ENCODE measurements at regions of chr2 and their contacts with region 1.

Region 1: DNA sequence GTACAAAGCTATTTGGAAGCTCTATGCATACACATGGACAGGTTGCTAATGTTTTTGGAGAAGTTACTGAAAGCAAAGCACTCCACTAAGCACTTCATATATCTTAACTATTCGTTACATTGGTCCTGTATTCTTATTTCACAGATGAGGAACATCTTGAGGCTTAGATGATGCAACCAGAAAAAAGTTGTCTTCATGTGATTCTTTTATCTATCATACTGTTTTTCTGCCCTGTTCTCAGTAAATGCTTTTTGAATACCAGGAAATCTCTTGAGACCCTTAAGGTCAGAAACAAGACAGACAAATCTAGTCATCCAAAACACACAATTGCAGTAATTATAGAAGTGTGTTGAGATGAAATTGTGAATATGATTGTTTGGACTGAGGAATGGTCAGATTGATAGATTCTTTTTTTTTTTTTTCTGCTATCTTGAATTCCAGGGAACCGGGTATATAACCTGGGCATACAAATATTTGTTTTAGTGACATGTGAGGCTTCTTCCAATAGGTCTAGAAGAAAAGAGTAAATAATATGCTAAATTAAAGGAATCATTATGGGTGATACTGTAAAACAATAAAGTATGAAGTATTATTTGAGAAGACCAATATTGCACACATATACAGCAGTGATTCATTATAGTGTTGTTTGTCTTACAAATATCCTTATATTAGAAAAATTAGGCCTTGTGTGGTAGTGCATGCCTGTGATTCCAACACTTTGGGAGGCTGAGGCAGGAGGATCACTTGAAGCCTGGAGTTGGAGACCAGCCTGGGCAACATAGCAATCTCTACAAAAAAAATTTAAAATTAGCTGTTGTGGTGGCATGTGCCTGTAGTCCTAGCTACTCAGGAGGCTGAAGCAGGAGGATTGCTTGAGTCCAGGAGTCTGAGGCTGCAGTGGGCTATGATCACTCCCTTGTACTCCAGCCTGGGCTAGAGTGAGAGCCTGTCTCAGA is 33.7 kb downstream of the EHBP1 start:
- DNase-seq: no peak
- H3K4me3 ChIP-seq: no peak overlapping the region
- H3K4me3 Mint-ChIP-seq: no peak overlapping the region
- H3K27ac Mint-ChIP-seq: no peak overlapping the region
- H3K4me1 ChIP-seq: peaks cover 41% of the 10 kb centered on the region
- H3K4me1 Mint-ChIP-seq: peaks cover 46% of the 10 kb centered on the region
- H3K27me3 ChIP-seq: no peaks in the 10 kb centered on the region
- H3K27me3 Mint-ChIP-seq: no peaks in the 10 kb centered on the region
- CTCF ChIP-seq: no peak

Region 2: DNA sequence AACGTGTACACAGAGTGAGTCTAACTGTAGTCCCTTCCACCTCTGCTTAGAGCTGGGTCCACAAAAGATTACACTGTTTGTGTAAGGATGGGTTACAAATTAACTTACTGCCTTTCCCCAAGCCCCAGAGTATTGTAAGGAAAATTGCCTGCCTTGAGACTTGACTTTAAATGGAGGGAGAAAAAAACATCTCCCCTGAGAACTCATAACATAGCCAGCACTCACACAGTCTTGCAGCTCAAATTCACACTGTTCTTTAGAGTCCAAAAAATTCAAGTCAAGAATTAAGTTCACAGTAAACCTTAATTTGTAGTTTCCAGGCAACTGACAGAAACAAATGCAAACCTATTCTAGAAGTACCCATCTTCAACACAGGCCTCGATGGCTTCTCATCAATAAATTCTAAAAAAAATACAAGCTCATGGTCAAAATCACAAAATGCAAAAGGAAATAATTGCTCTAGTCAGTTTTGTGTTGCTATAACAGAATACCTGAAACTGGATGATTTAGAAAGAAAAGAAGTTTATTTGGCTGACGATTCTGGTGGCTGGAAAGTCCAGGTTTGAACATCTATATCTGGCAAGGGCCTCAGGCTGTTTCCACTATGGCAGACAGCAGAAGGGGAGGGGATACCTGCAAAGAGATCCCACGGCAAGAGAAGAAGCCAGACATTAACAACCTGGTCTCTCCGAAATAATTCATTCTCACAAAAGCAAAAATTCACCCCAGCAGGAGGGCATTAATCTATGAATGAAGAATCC is 198.7 kb before region 1 on chr2:
- CTCF ChIA-PET with region 1: no interaction called
- POLR2A ChIA-PET with region 1: no interaction called
- intact Hi-C with region 1: loop called (anchors 1 kb)
- DNase-seq: peak in 1 of 2 experiments; percentile 67
- H3K4me3 ChIP-seq: no peak overlapping the region
- H3K4me3 Mint-ChIP-seq: peak overlapping the region; percentile 9
- H3K27ac Mint-ChIP-seq: peak overlapping the region; percentile 78
- H3K4me1 ChIP-seq: peaks cover 60% of the 10 kb centered on the region
- H3K4me1 Mint-ChIP-seq: peaks cover 61% of the 10 kb centered on the region
- H3K27me3 ChIP-seq: no peaks in the 10 kb centered on the region
- H3K27me3 Mint-ChIP-seq: no peaks in the 10 kb centered on the region
- CTCF ChIP-seq: no peak

Region 3: GRCh38 chr2:62631160-62632085 is 107.8 kb before region 1 on chr2:
- CTCF ChIA-PET with region 1: no interaction called
- POLR2A ChIA-PET with region 1: interaction called, 12 read pairs
- intact Hi-C with region 1: no loop called
- DNase-seq: peak in 1 of 2 experiments; percentile 43
- H3K4me3 ChIP-seq: no peak overlapping the region
- H3K4me3 Mint-ChIP-seq: no peak overlapping the region
- H3K27ac Mint-ChIP-seq: no peak overlapping the region
- H3K4me1 ChIP-seq: peaks cover 6% of the 10 kb centered on the region; the same call in 1 of the 2 replicates
- H3K4me1 Mint-ChIP-seq: peaks cover 6% of the 10 kb centered on the region
- H3K27me3 ChIP-seq: no peaks in the 10 kb centered on the region
- H3K27me3 Mint-ChIP-seq: no peaks in the 10 kb centered on the region
- CTCF ChIP-seq: no peak

Region 4: DNA sequence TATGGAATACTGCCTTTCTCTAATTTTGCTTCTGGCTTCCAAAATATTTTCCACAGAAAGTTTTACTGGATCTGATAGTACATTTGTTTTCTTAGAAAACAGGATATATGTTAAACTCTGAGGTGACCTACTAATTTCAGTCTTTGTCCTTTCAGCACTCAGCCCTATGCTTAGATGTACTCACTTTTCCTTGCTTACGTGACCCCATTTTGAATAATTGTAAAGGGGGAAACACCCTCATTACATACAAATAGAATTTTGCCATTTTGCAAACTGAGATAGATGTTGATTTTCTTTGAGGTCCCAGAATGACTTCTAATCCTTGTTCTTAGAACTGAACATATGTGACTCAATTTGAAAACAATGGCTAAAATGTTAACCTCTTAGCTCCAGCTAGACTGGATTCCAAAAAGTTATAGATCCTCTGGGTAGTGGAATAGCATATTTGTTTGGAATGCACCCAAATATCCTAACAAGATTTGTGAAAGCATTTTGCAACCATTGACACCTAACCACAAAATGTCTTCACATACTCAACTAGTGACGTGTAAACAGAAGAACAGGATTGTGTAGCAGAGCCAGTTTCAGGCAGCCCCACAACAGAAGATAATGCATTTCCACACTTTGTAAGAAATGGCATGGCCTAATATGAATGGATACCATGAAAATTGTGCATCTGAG is 78.5 kb before region 1 on chr2:
- CTCF ChIA-PET with region 1: no interaction called
- POLR2A ChIA-PET with region 1: no interaction called
- intact Hi-C with region 1: no loop called
- DNase-seq: no peak
- H3K4me3 ChIP-seq: no peak overlapping the region
- H3K4me3 Mint-ChIP-seq: no peak overlapping the region
- H3K27ac Mint-ChIP-seq: no peak overlapping the region
- H3K4me1 ChIP-seq: peaks cover 32% of the 10 kb centered on the region
- H3K4me1 Mint-ChIP-seq: peaks cover 40% of the 10 kb centered on the region
- H3K27me3 ChIP-seq: no peaks in the 10 kb centered on the region
- H3K27me3 Mint-ChIP-seq: no peaks in the 10 kb centered on the region
- CTCF ChIP-seq: no peak

Measured in Caco-2 (cell line).